CD14-positive monocyte (primary cell): ENCODE measurements at regions of chr3 and their contacts with region 1.

Region 1: DNA sequence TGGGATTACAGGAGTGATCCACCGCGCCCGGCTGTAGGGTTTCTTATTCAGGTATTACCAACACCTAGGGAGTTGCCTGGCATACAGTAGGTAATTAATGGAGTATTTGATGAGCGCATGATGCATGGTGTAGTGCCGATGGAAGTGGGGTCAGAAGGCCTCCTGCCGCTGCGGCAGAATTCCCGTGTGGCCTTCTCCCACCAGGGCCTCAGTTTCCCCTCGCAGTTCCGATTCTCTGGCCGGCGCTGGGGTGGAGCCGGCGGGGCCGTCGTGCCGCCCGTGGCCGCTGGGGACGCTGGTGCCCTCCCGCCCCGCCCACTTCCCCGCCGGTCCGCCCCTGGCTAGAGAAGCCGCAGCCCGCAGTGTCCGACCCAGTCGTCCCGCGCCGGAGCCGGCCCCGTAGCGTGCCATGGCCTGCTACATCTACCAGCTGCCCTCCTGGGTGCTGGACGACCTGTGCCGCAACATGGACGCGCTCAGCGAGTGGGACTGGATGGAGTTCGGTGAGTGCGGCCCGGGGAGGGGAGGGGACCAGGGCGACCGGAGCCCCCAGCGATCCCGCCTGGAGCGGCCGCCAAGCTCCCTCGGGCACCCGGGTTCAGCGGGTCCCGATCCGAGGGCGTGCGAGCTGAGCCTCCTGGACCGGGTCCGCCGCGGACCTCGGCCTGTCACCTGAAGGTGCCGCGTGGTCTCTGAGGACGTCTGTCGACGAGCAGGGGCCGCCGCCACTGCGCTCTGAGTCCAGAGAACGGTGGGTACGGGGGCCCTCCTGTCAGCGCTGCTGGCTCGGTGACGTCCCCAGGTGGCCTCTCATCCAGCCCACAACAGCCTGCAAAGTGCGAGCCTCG is at the start of gene IRAK2:
- DNase-seq: peak; percentile 76 to 87 (median 79)
- H3K4me3 ChIP-seq: peak within 1 kb of the TSS; percentile 58 to 88 (median 64)
- H3K4me3 Mint-ChIP-seq: peak within 1 kb of the TSS; percentile 84 to 87
- H3K27ac ChIP-seq: peak within 1 kb of the TSS in 1 of 2 donors; percentile 83
- H3K27ac Mint-ChIP-seq: peak within 1 kb of the TSS; percentile 73 to 94 (median 76)
- H3K4me1 ChIP-seq: peaks cover 21 to 33% of the 10 kb centered on the region in 2 donors
- H3K4me1 Mint-ChIP-seq: peaks cover 33% of the 10 kb centered on the region
- H3K27me3 ChIP-seq: no peaks in the 10 kb centered on the region
- H3K27me3 Mint-ChIP-seq: peaks cover 0 to 1% (median 0%) of the 10 kb centered on the region in 3 donors
- CTCF ChIP-seq: peak; percentile 99
- polyA plus RNA-seq, gene IRAK2: 0.78 to 2.0 (median 1.5) TPM

Region 2: GRCh38 chr3:10055097-10055496 is 109.7 kb before region 1 on chr3:
- intact Hi-C with region 1: no loop called
- DNase-seq: no peak
- H3K4me3 ChIP-seq: no peak overlapping the region
- H3K4me3 Mint-ChIP-seq: no peak overlapping the region
- H3K27ac ChIP-seq: no peak overlapping the region
- H3K27ac Mint-ChIP-seq: no peak overlapping the region
- H3K4me1 ChIP-seq: no peaks in the 10 kb centered on the region
- H3K4me1 Mint-ChIP-seq: no peaks in the 10 kb centered on the region
- H3K27me3 ChIP-seq: no peaks in the 10 kb centered on the region
- H3K27me3 Mint-ChIP-seq: peaks cover 0 to 2% (median 0%) of the 10 kb centered on the region in 3 donors
- CTCF ChIP-seq: no peak

Region 3: DNA sequence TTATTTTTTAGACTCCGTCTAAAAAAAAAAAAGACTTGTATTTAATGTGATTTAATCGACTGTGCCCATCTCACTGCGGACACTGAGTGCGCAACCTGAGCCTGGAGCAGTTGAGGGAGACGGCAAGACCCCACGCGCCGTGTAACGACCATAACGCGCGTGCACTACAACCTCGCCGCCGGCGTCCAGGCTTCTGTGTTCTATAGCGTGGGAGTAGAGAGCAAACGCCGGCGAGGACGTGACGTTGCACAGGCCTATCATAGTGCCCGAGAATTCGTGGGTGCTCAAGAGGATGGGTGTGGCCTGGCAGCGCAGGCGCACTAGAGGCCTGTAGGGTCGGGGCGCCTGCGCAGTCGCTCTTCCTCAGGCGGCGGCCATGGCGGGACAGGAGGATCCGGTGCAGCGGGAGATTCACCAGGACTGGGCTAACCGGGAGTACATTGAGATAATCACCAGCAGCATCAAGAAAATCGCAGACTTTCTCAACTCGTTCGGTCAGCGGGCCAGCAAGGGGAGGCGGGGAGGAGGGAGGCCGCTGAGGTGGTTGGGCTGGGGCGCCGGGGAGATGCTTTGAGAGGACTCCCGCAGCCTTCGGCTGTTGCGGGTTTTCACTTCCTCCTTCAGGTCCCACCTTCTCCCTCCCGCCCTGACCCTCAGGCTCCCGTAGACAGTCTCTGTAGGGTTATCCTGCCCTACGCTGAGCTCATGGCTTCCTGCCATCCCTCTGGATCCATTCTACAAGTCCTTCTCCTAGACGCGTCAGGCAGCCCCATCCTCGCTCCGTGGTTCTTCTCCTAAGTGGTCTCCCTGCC is 49.2 kb before region 1 on chr3 and contains the start of gene BRK1:
- intact Hi-C with region 1: loop called in 1 of 2 experiments (anchors 10 kb)
- DNase-seq: peak; percentile 96 to 98 (median 97)
- H3K4me3 ChIP-seq: peak within 1 kb of the TSS; percentile 90 to 97 (median 96)
- H3K4me3 Mint-ChIP-seq: peak within 1 kb of the TSS; percentile 99 to 100
- H3K27ac ChIP-seq: peak within 1 kb of the TSS; percentile 78 to 96
- H3K27ac Mint-ChIP-seq: peak within 1 kb of the TSS; percentile 92 to 98 (median 97)
- H3K4me1 ChIP-seq: peaks cover 21% of the 10 kb centered on the region in 2 donors
- H3K4me1 Mint-ChIP-seq: peaks cover 21% of the 10 kb centered on the region
- H3K27me3 ChIP-seq: no peaks in the 10 kb centered on the region
- H3K27me3 Mint-ChIP-seq: peaks cover 3 to 8% (median 5%) of the 10 kb centered on the region in 3 donors
- CTCF ChIP-seq: no peak
- polyA plus RNA-seq, gene BRK1: 144 to 318 (median 295) TPM

Region 4: DNA sequence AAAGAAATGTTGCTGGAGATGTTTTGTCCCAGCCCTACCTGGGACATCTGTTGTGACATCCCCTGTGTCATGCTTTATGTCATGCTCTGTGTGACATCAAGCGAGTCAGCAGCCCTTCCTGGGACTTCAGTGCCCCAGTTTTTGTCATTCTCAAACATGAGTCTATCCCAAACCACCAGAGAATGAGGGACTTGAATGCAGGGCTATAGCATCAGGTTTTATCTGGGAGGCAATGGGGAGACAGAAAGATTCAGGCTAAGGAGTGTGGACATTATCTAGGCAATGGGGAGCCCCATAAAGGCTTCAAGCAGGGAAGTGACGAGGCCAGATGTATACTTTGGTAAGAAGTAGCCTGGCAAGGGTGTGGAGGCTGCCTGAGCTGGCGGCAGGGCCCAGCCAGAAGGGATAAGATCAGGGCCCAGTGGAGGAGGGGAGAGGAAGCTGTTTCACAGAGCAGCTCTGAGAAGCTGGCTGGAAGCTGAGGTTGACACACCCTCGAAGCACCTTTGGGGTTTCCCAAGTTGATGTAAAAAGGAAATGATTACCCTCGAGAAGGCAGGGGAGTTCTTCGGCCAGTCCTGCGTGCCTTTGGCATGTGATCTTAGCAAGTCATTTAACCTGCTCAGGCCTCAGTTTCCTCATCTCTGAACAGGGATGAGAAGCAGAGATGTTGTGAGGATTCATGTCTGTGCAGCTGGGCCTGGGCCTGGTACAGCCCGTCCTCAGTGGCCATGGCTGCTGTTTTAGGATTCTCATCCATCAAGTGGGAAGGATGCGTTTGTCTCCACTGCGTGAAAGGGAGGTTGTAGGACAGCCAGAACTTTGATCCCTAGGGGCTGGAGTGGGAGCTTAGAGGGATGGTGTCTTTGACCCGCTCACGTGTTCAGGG is 34.2 kb after region 1 on chr3:
- intact Hi-C with region 1: loop called in 1 of 2 experiments (anchors 5 kb)
- DNase-seq: peak; percentile 87 to 99 (median 89)
- H3K4me3 ChIP-seq: no peak overlapping the region
- H3K4me3 Mint-ChIP-seq: peak overlapping the region in 1 of 2 donors; percentile 21
- H3K27ac ChIP-seq: peak overlapping the region; percentile 73 to 87
- H3K27ac Mint-ChIP-seq: peak overlapping the region; percentile 87 to 99 (median 90)
- H3K4me1 ChIP-seq: peaks cover 45 to 51% of the 10 kb centered on the region in 2 donors
- H3K4me1 Mint-ChIP-seq: peaks cover 48% of the 10 kb centered on the region
- H3K27me3 ChIP-seq: no peaks in the 10 kb centered on the region
- H3K27me3 Mint-ChIP-seq: peaks cover 0 to 6% (median 0%) of the 10 kb centered on the region in 3 donors
- CTCF ChIP-seq: no peak

Region 5: DNA sequence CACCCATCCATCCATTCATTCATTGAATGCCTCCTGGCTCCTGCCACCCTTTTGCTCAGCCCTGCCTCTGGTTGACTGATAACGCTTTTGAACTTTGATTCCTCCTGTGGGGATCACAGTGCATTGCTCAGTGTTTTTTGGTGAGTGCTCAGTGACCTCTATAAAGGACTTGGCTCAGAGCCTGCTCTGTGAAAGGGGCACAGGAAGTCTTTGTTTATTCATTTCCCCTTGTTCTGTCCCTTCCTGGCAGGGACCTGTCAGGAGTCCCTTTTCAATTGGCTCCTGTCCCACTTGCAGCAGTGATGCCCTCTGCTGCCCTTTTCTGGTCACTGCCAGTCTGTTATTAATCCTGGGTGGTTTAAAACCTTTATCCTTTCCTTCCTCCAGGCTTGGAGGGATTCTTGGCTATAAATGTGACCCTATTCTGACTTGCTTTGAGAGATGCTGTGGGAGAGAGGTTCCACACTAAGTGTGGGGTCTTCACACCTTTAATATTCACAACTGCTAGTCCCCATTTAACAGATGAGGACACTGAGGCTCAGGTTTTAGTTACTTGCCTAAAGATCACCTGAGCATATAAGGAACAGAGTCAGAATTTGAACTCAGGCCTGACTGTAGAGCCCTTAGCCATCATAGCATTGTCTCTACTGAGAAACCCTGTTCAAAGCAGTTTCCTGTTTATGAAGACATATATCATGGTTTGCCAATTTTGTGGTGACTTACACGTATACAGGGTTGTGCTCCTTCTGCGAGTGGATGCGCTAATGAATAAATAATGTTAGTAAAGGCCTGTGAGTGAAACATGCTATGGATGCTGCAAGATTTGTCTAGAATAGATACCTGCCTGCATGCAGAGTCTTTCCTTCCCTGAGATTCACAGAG is 60.3 kb after region 1 on chr3:
- intact Hi-C with region 1: loop called (anchors 2 to 5 kb)
- DNase-seq: peak; percentile 79 to 90 (median 89)
- H3K4me3 ChIP-seq: no peak overlapping the region
- H3K4me3 Mint-ChIP-seq: peak overlapping the region in 1 of 2 donors; percentile 46
- H3K27ac ChIP-seq: peak overlapping the region in 1 of 2 donors; percentile 71
- H3K27ac Mint-ChIP-seq: peak overlapping the region; percentile 84 to 91 (median 85)
- H3K4me1 ChIP-seq: peaks cover 51 to 65% of the 10 kb centered on the region in 2 donors
- H3K4me1 Mint-ChIP-seq: peaks cover 69% of the 10 kb centered on the region
- H3K27me3 ChIP-seq: no peaks in the 10 kb centered on the region
- H3K27me3 Mint-ChIP-seq: peaks cover 0 to 2% (median 0%) of the 10 kb centered on the region in 3 donors
- CTCF ChIP-seq: peak; percentile 85

Region 6: GRCh38 chr3:10248184-10249080 is 83.7 kb after region 1 on chr3 and contains the start of gene TATDN2:
- intact Hi-C with region 1: loop called in 1 of 2 experiments (anchors 5 kb)
- DNase-seq: peak; percentile 93 to 97 (median 96)
- H3K4me3 ChIP-seq: peak within 1 kb of the TSS; percentile 64 to 90 (median 80)
- H3K4me3 Mint-ChIP-seq: peak within 1 kb of the TSS; percentile 95 to 97
- H3K27ac ChIP-seq: peak within 1 kb of the TSS; percentile 48 to 89
- H3K27ac Mint-ChIP-seq: peak within 1 kb of the TSS; percentile 90 to 96 (median 92)
- H3K4me1 ChIP-seq: peaks cover 28 to 35% of the 10 kb centered on the region in 2 donors
- H3K4me1 Mint-ChIP-seq: peaks cover 30% of the 10 kb centered on the region
- H3K27me3 ChIP-seq: no peaks in the 10 kb centered on the region
- H3K27me3 Mint-ChIP-seq: no peaks in the 10 kb centered on the region
- CTCF ChIP-seq: no peak
- polyA plus RNA-seq, gene TATDN2: 6.0 to 27.1 (median 6.0) TPM